Caco-2 (cell line): ENCODE measurements at regions of chr10 and their contacts with region 1.

Region 1: DNA sequence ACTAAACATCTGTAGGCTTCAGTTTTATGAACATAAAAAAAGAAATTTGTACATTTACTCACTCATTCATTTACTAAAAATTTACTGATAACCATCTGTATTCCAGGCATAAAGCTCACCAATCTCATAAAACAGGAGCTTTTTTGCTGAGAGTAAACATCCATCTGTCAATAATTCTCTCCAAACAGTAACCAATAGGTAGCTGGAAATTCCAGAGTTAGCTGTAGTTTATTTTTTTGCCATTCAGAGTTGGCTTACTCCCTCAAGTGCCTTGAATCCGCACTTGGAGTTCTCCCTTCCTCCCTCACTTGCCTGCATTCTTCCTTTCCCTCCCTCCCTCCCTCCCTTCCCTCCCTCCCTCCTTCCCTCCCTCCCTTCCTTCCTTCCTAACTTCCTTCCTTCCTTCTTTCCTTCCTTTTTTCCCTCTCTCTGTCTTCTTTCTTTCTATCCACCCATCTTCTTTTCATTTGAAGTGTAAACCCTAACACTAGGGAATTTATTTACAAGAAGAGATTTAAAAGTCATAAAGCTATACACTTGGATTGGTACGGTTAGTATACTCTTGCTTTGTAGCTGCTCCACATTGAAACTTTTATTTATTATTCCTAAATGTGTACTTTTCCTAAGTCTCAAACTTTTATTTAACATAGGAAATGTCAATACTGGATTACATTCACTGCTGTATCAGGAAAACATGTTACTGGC is 44.6 kb upstream of the BICC1 start:
- DNase-seq: peak; percentile 50 to 64
- H3K4me3 ChIP-seq: no peak overlapping the region
- H3K4me3 Mint-ChIP-seq: peak overlapping the region; percentile 39
- H3K27ac Mint-ChIP-seq: peak overlapping the region; percentile 69
- H3K4me1 ChIP-seq: peaks cover 45% of the 10 kb centered on the region
- H3K4me1 Mint-ChIP-seq: peaks cover 30% of the 10 kb centered on the region
- H3K27me3 ChIP-seq: no peaks in the 10 kb centered on the region
- H3K27me3 Mint-ChIP-seq: no peaks in the 10 kb centered on the region
- CTCF ChIP-seq: no peak

Region 2: DNA sequence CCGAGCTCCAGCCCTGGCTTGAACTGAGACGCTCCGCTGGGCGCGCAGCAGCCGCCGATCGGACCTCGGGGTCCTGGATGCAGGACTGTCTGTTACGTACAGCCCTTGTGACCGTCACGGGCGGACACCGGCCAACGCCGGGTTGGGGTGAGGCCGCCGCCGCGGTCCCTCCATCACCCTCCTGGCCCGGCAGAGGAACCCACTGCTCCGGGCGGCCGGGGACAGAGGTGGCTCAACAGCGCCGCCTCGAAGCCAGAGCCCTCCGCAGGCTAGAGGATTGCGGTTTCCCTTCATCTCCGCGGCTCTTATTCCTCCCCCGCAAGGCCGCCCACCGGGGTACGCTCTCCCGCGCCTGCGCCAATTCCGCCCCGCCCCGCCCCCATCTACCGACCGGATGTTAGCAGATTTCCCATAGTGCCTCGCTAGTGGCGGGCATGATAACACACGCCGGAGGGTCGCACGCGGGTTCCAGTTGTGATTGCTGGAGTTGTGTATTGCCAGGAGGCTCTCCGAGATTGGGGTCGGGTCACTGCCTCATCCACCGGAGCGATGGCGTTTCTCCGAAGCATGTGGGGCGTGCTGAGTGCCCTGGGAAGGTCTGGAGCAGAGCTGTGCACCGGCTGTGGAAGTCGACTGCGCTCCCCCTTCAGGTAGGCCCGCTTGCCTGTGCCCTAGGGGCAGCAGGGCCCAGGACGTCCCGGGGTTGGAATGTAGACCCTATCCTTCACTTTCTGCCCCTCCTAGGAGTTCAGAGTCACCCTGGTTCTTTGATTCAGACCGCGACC is 82.9 kb before region 1 on chr10 and contains the start of gene TFAM:
- CTCF ChIA-PET with region 1: interaction called, 3 read pairs
- POLR2A ChIA-PET with region 1: no interaction called
- intact Hi-C with region 1: loop called (anchors 1 kb)
- DNase-seq: peak; percentile 99 to 100
- H3K4me3 ChIP-seq: peak within 1 kb of the TSS; percentile 83
- H3K4me3 Mint-ChIP-seq: peak within 1 kb of the TSS; percentile 87
- H3K27ac Mint-ChIP-seq: peak within 1 kb of the TSS; percentile 80
- H3K4me1 ChIP-seq: no peaks in the 10 kb centered on the region; the same call in 1 of the 2 replicates
- H3K4me1 Mint-ChIP-seq: peaks cover 9% of the 10 kb centered on the region
- H3K27me3 ChIP-seq: no peaks in the 10 kb centered on the region
- H3K27me3 Mint-ChIP-seq: no peaks in the 10 kb centered on the region
- CTCF ChIP-seq: peak; percentile 71 to 98
- total RNA-seq, gene TFAM: 228 and 240 TPM in 2 replicates

Region 3: GRCh38 chr10:58457761-58458616 is 10.1 kb before region 1 on chr10:
- CTCF ChIA-PET with region 1: no interaction called
- POLR2A ChIA-PET with region 1: interaction called, 12 read pairs
- intact Hi-C with region 1: no loop called
- DNase-seq: no peak
- H3K4me3 ChIP-seq: no peak overlapping the region
- H3K4me3 Mint-ChIP-seq: no peak overlapping the region
- H3K27ac Mint-ChIP-seq: no peak overlapping the region
- H3K4me1 ChIP-seq: peaks cover 7% of the 10 kb centered on the region; the same call in 1 of the 2 replicates
- H3K4me1 Mint-ChIP-seq: peaks cover 5% of the 10 kb centered on the region
- H3K27me3 ChIP-seq: no peaks in the 10 kb centered on the region
- H3K27me3 Mint-ChIP-seq: no peaks in the 10 kb centered on the region
- CTCF ChIP-seq: no peak

Region 4: DNA sequence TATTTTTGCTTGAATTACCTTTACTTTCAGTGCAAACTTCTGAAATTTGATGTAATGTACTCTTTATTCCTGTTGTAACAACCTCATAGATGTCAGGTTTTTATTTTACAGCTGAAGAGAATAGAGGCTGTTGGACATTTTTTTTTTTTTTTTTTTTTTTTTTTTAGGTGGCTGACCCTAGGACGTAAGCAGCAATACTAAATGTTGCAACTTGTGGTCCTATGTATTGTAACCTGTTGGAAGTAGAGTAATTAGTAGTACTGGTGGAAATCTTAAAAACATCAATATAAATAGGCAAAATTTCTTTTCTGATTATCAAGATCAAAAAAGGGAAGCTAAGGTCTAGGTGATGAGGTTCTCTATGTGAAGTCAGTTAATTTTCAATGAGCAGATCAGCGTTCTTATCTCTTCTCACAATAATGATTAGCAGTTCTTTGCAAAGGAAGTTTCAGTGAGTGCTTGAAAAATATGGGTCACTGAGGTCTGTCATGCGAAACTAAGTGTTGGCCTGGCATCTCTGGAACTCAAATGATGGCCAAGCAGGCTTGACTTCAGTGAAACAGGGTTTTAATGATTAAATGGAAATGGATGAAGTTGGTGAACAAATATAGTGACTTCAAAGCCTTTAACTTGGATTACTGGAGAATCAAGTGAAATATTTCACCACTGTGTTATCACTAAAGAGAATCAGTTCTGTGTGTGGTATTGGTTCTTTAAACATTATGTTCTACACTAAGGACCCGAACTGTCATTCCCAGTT is 87.3 kb after region 1 on chr10:
- CTCF ChIA-PET with region 1: no interaction called
- POLR2A ChIA-PET with region 1: no interaction called
- intact Hi-C with region 1: loop called (anchors 1 kb)
- DNase-seq: peak; percentile 87 to 90
- H3K4me3 ChIP-seq: no peak overlapping the region
- H3K4me3 Mint-ChIP-seq: peak overlapping the region; percentile 54
- H3K27ac Mint-ChIP-seq: peak overlapping the region; percentile 27
- H3K4me1 ChIP-seq: peaks cover 74% of the 10 kb centered on the region
- H3K4me1 Mint-ChIP-seq: peaks cover 79% of the 10 kb centered on the region
- H3K27me3 ChIP-seq: no peaks in the 10 kb centered on the region
- H3K27me3 Mint-ChIP-seq: no peaks in the 10 kb centered on the region
- CTCF ChIP-seq: no peak

Region 5: GRCh38 chr10:58813573-58813972 is 345.5 kb after region 1 on chr10:
- CTCF ChIA-PET with region 1: no interaction called
- POLR2A ChIA-PET with region 1: no interaction called
- intact Hi-C with region 1: loop called (anchors 1 kb)
- DNase-seq: peak; percentile 81 to 84
- H3K4me3 ChIP-seq: no peak overlapping the region
- H3K4me3 Mint-ChIP-seq: peak overlapping the region; percentile 67
- H3K27ac Mint-ChIP-seq: peak overlapping the region; percentile 85
- H3K4me1 ChIP-seq: peaks cover 69% of the 10 kb centered on the region
- H3K4me1 Mint-ChIP-seq: peaks cover 80% of the 10 kb centered on the region
- H3K27me3 ChIP-seq: no peaks in the 10 kb centered on the region
- H3K27me3 Mint-ChIP-seq: no peaks in the 10 kb centered on the region
- CTCF ChIP-seq: no peak